ENCODE measurements at regions of chr4 and their contacts with region 1.

Region 1: DNA sequence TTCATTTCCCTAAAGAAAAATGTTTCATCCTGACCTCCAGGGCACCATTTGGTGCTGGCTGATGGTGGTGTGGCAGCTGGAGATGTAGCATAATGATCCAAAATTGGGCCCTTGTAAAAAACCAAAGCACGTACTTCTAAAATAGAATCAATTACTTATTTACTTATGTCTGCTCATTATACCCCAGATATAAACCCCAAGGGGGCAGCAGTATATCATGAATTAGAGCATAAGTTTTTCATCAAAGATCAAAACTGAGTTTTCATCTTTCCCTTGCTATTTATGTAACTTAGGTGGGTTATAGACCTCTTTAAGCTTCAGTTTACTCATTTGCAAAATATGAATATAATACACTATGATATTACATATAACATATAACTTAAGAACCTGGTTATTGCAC is 241.1 kb downstream of the TACR3 start:
- DNase-seq: no peak
- H3K4me3 Mint-ChIP-seq: no peak overlapping the region
- H3K27ac Mint-ChIP-seq: no peak overlapping the region
- H3K4me1 Mint-ChIP-seq: no peaks in the 10 kb centered on the region
- H3K27me3 Mint-ChIP-seq: no peaks in the 10 kb centered on the region

Region 2: DNA sequence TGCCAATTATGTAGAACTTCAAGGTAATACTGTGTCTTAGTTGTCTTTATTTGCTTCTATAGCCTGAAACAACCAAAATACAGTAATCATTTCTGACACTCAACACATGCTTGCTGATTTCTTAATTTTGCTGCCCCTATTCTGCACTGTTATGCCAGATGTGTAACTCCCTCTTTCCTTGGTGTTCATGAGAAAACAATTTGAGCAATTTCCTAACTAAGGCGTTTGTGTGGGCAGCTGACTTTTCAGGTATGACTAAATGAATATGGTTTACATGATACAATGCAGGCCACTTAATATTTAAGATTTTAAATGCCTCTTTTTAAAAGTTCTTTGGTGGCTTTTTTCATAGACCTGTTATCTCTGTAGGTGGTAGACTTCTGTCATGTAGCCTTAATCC is 234.5 kb before region 1 on chr4:
- CTCF ChIA-PET with region 1: no interaction called
- intact Hi-C with region 1: no loop called
- DNase-seq: no peak
- H3K4me3 Mint-ChIP-seq: no peak overlapping the region
- H3K27ac Mint-ChIP-seq: no peak overlapping the region
- H3K4me1 Mint-ChIP-seq: no peaks in the 10 kb centered on the region
- H3K27me3 Mint-ChIP-seq: peaks cover 5% of the 10 kb centered on the region

Region 3: DNA sequence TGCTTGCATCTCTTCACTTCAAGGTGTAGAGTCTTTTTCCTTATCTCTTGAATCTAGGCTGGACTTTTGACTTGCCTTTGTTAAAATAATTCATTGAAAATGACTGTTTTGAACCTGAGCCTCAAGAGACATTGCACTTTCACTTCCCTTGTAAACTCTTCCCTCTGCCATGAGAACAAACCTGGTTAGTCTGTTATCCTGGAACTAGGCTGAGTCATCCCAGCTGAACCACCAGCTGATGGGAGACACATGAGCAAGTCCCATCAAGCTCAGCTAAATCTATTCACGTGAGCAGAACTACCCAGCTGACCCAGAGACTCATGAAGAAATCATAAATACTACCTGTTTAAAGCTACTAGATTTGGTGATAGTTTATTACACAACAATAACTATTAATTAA is 78.3 kb before region 1 on chr4:
- CTCF ChIA-PET with region 1: no interaction called
- intact Hi-C with region 1: no loop called
- DNase-seq: no peak
- H3K4me3 Mint-ChIP-seq: no peak overlapping the region
- H3K27ac Mint-ChIP-seq: no peak overlapping the region
- H3K4me1 Mint-ChIP-seq: no peaks in the 10 kb centered on the region
- H3K27me3 Mint-ChIP-seq: peaks cover 3% of the 10 kb centered on the region

Region 4: DNA sequence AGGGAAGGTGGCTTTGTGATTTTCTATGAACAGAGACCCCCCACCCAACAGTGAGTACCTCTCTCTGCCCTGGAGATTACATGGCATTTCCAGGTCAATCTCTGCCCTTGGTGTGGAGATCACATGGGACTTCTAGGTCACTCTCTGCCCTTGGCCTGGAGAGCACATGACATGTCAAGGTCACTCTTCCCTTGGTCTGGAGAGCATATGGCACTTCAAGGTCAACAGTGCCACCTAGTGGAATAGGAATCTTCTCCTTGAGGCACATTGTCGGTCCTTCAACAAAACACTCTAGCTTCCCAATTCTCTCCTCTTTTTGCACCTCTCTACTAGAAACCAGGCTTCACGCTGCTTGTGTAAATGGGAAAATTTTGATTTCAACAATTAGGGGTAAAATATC is 307.3 kb after region 1 on chr4:
- CTCF ChIA-PET with region 1: no interaction called
- intact Hi-C with region 1: loop called (anchors 1 kb)
- DNase-seq: no peak
- H3K4me3 Mint-ChIP-seq: no peak overlapping the region
- H3K27ac Mint-ChIP-seq: no peak overlapping the region
- H3K4me1 Mint-ChIP-seq: no peaks in the 10 kb centered on the region
- H3K27me3 Mint-ChIP-seq: no peaks in the 10 kb centered on the region